ENCODE measurements at regions of chr1 and their contacts with region 1.

Region 1: DNA sequence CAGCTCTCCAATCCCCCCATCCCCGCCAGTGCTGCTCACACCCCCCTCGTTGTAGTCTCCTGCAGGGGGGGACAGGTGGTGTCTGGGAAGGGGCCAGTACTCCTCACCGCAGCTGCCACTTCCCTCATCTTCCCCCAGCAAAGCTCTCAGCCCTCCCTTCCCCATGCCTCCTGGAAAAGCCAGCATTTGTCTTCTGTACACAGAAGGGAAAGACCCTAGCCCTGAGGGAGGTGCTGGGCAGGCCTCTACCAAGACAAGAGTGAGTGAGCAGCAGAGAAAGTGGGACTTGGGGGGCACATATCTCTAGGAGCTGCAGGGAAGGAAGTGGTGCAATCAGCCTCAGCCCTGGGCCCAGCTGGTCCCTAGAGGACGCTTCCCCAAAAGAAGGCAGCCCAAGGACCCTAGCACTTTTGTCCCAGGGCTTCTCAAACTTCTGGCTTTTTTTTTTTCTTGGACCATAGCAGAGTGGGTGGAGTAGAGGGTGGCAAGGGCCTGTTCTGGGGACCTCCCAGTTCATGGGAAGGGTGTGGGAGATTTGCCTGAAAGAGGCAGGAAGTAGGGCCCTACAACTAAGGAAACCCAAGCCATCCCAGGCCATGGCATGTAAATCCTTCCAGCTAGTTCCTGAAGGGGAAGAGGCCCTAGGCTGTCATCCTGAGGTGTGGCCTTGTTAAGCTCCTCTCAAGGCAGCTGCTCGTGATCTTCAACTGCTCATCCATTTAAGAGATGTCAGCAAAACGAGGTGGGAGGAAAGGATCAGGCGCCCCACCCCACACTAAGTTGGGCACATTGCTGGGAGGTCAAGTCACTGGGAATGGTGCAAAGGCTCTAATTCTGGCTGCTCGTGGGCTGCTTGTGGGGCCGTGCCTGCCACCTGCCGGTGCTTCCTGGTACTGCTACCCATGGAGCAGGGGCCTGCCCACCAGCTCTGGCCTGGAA is 12.6 kb downstream of the ZC3H12A start:
- DNase-seq: peak in 1 of 2 experiments; percentile 97
- H3K4me3 ChIP-seq: no peak overlapping the region
- H3K27ac ChIP-seq: no peak overlapping the region
- H3K4me1 ChIP-seq: peaks cover 0 to 5% (median 1%) of the 10 kb centered on the region in 4 experiments; a peak in 3 of 7 replicates
- H3K27me3 ChIP-seq: no peaks in the 10 kb centered on the region
- CTCF ChIP-seq: peak; percentile 88 to 98 (median 93)
- EP300 ChIP-seq: no peak
- POLR2A ChIP-seq: no peak
- RAD21 ChIP-seq: peak; percentile 83 to 85

Region 2: DNA sequence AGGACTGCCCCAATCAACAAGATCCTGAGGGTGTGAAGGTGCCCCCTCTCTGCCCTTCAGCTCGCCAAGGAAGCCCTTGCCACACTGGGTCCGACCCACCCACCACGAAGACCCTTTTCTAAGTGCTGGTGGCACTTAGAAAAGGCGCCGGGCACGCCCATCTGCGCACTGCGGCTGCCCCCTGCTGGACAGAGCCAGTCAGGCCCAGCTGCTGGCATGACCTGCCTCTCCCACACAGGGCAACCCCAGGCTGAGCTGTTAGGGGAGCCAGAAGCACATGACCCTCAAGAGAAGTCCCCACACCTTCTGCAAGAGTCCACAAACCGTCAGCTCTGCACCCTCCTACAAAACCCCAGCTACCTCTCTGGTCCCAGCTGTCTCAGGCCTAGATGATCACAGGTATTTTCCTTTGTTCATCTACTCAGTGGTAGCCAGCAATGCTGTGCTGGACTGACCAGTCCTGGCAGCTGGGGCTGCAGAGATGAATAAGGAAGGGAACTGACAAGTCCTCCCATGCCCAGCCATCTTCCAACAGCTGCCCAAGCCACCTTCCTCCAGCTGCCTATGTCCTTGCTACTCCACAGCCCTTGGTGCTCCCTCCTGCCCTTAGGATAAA is 52.5 kb before region 1 on chr1:
- CTCF ChIA-PET with region 1: interaction called, 16 read pairs
- POLR2A ChIA-PET with region 1: no interaction called
- DNase-seq: peak; percentile 31 to 95
- H3K4me3 ChIP-seq: no peak overlapping the region
- H3K27ac ChIP-seq: no peak overlapping the region
- H3K4me1 ChIP-seq: peaks cover 0 to 17% (median 6%) of the 10 kb centered on the region in 4 experiments; a peak in 6 of 7 replicates
- H3K27me3 ChIP-seq: no peaks in the 10 kb centered on the region; a peak in 1 of 7 replicates
- CTCF ChIP-seq: peak; percentile 94 to 98 (median 97)
- EP300 ChIP-seq: no peak
- POLR2A ChIP-seq: no peak
- RAD21 ChIP-seq: peak; percentile 97

Region 3: DNA sequence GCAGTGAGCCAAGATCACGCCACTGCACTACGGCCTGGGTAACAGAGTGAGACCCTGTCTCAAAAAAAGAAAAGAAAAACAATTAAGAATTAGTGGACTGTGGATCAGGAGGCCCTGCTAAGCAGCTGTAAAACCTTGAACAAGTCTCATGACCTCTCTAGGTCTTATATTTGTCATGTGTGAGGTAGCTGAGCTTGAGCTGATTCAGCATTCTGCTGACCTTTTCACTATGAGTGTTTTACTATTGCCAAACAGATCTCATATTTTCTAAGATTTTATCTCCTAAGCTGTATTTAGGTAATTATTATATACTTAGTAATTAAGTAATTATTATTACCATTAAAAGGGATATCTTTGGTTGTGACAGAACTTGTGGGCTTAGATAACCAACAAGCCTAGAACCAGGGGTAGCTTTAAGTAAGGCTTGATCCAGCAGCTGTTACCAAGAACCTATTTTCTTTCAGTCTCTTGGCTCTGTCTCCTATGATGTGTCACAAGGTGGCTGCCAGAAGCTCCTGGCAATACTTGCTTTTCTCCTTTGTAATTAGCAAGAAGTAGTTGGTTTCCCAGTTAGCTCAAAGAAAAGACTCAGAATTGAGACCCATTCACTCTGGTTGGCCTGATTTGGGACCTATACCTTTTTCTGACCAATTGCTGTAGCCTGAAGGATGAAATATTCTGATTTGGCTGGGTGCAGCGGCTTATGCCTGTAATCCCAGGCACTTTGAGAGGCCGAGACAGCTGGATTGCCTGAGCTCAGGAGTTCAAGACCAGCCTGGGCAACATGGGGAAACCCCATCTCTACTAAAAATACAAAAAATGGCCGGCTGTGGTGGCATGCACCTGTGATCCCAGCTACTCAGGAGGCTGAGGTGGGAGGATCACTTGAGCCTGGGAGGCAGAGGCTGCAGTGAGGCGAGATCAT is 21.1 kb before region 1 on chr1:
- CTCF ChIA-PET with region 1: interaction called, 382 read pairs
- POLR2A ChIA-PET with region 1: interaction called, 12 read pairs
- DNase-seq: no peak
- H3K4me3 ChIP-seq: no peak overlapping the region
- H3K27ac ChIP-seq: no peak overlapping the region
- H3K4me1 ChIP-seq: no peaks in the 10 kb centered on the region
- H3K27me3 ChIP-seq: no peaks in the 10 kb centered on the region
- CTCF ChIP-seq: no peak
- EP300 ChIP-seq: no peak
- POLR2A ChIP-seq: no peak
- RAD21 ChIP-seq: no peak

Region 4: GRCh38 chr1:37498872-37499617 is 12.1 kb after region 1 on chr1:
- CTCF ChIA-PET with region 1: interaction called, 39 read pairs
- POLR2A ChIA-PET with region 1: no interaction called
- DNase-seq: no peak
- H3K4me3 ChIP-seq: no peak overlapping the region
- H3K27ac ChIP-seq: no peak overlapping the region
- H3K4me1 ChIP-seq: no peaks in the 10 kb centered on the region
- H3K27me3 ChIP-seq: no peaks in the 10 kb centered on the region
- CTCF ChIP-seq: no peak
- EP300 ChIP-seq: no peak
- POLR2A ChIP-seq: no peak
- RAD21 ChIP-seq: no peak

Region 5: GRCh38 chr1:37514350-37515184 is 27.6 kb after region 1 on chr1 and contains the start of gene MEAF6:
- CTCF ChIA-PET with region 1: interaction called, 17 read pairs
- POLR2A ChIA-PET with region 1: interaction called, 14 read pairs
- DNase-seq: peak; percentile 46 to 92
- H3K4me3 ChIP-seq: peak within 1 kb of the TSS; percentile 69 to 97 (median 78)
- H3K27ac ChIP-seq: peak within 1 kb of the TSS; percentile 79; the same call in 1 of the 2 replicates
- H3K4me1 ChIP-seq: peaks cover 2 to 13% (median 6%) of the 10 kb centered on the region in 4 experiments; a peak in 4 of 7 replicates
- H3K27me3 ChIP-seq: no peaks in the 10 kb centered on the region
- CTCF ChIP-seq: peak; percentile 61 to 70 (median 63)
- EP300 ChIP-seq: peak in 1 of 2 experiments; percentile 32; a peak in 1 of 3 replicates
- POLR2A ChIP-seq: peak; percentile 46 to 60; a peak in 2 of 3 replicates
- RAD21 ChIP-seq: no peak
- total RNA-seq, gene MEAF6: 36.9 and 38.8 TPM in 2 replicates